CD8-positive, alpha-beta T cell (primary cell): ENCODE measurements at regions of chr9 and their contacts with region 1.

Region 1: DNA sequence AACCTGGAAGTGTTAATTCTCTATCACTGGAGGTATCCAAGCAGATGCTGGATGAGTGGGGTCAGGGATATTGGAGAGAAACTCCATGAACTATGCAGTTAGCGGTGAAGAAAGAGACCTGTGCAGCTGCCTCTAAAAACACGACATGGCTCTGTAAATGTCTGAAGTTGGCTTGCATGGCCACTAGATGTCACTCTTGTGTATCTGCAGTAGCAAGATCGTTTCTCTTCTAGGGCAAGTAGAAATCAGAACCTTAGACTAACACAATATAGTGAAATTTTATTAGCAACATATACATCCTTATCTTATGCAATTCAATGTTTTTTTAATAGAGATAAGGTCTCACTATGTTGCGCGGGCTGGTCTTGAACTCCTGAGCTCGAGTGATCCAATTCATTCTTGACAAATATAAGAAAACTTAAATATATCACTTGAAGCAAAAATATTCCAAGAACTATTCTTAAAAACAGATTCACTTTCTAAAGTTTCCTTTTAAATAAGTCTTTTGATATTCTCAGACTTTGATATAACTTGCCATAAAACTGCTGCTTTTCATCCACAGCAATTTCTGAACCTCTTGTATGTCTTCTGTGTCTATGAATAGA is 2.9 kb downstream of the OR2S2 start:
- DNase-seq: peak in 8 of 9 experiments; percentile 12 to 80 (median 46)
- ATAC-seq: peak; percentile 67
- H3K4me3 ChIP-seq: no peak overlapping the region
- H3K4me3 Mint-ChIP-seq: no peak overlapping the region
- H3K27ac ChIP-seq: no peak overlapping the region
- H3K27ac Mint-ChIP-seq: no peak overlapping the region
- H3K4me1 ChIP-seq: no peaks in the 10 kb centered on the region
- H3K4me1 Mint-ChIP-seq: peaks cover 2% of the 10 kb centered on the region
- H3K27me3 ChIP-seq: peaks cover 0 to 3% of the 10 kb centered on the region in 2 experiments
- H3K27me3 Mint-ChIP-seq: peaks cover 12% of the 10 kb centered on the region
- CTCF ChIP-seq: peak; percentile 86

Region 2: GRCh38 chr9:35976726-35977125 is 21.7 kb after region 1 on chr9:
- CTCF ChIA-PET with region 1: interaction called, 10 read pairs
- POLR2A ChIA-PET with region 1: no interaction called
- intact Hi-C with region 1: no loop called
- DNase-seq: no peak
- ATAC-seq: no peak
- H3K4me3 ChIP-seq: no peak overlapping the region
- H3K4me3 Mint-ChIP-seq: no peak overlapping the region
- H3K27ac ChIP-seq: no peak overlapping the region
- H3K27ac Mint-ChIP-seq: no peak overlapping the region
- H3K4me1 ChIP-seq: no peaks in the 10 kb centered on the region
- H3K4me1 Mint-ChIP-seq: peaks cover 12% of the 10 kb centered on the region
- H3K27me3 ChIP-seq: peaks cover 0 to 7% of the 10 kb centered on the region in 2 experiments
- H3K27me3 Mint-ChIP-seq: peaks cover 54% of the 10 kb centered on the region
- CTCF ChIP-seq: no peak

Region 3: DNA sequence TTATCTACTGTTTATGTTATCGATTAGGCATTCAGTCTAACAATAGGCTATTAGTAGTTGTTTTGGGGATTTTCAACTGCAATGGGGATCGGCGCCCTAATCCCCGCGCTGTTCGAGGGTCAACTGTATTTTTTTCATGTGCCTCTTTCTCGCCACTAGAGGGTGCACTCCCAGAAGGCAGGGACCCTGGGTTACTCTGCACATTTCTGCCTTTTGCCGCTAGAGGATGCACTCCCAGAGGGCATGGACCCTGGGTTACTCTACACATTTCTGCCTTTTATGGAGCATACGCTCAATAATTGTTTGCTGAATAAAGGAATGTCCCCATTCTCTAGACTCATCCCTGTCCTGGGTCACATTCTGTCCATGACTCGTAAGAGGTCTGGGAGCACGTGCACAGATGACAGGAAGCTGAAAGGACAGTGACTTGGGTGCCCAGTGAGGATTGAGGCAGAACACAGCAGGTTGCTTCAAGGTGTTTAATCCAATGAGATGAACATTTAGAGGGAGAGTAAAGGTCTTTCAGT is 53.8 kb after region 1 on chr9:
- CTCF ChIA-PET with region 1: interaction called, 13 read pairs
- POLR2A ChIA-PET with region 1: no interaction called
- intact Hi-C with region 1: no loop called
- DNase-seq: peak; percentile 8 to 83 (median 68)
- ATAC-seq: peak; percentile 99
- H3K4me3 ChIP-seq: no peak overlapping the region
- H3K4me3 Mint-ChIP-seq: no peak overlapping the region
- H3K27ac ChIP-seq: no peak overlapping the region
- H3K27ac Mint-ChIP-seq: no peak overlapping the region
- H3K4me1 ChIP-seq: no peaks in the 10 kb centered on the region
- H3K4me1 Mint-ChIP-seq: peaks cover 6% of the 10 kb centered on the region
- H3K27me3 ChIP-seq: peaks cover 0 to 6% of the 10 kb centered on the region in 2 experiments
- H3K27me3 Mint-ChIP-seq: peaks cover 31% of the 10 kb centered on the region
- CTCF ChIP-seq: peak; percentile 100

Region 4: DNA sequence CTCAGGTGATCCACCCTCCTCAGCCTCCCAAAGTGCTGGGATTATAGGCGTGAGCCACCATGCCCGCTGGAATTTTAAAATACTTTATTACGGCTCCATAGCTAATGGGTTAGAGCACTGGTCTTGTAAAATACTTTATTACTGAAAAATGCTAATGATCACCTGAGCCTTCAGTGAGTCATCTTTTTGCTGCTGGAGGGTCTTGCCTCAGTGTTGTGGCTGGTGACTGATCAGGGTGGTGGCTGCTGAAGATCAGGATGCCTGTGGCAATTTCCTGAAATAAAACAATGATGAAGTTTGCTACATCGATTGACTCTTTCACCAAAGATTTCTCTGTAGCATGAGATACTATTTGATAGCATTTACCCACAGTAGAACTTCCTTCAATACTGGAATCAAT is 329.2 kb after region 1 on chr9:
- CTCF ChIA-PET with region 1: no interaction called
- POLR2A ChIA-PET with region 1: no interaction called
- intact Hi-C with region 1: no loop called
- DNase-seq: no peak
- ATAC-seq: no peak
- H3K4me3 ChIP-seq: no peak overlapping the region
- H3K4me3 Mint-ChIP-seq: no peak overlapping the region
- H3K27ac ChIP-seq: no peak overlapping the region
- H3K27ac Mint-ChIP-seq: no peak overlapping the region
- H3K4me1 ChIP-seq: no peaks in the 10 kb centered on the region
- H3K4me1 Mint-ChIP-seq: no peaks in the 10 kb centered on the region
- H3K27me3 ChIP-seq: no peaks in the 10 kb centered on the region
- H3K27me3 Mint-ChIP-seq: no peaks in the 10 kb centered on the region
- CTCF ChIP-seq: no peak